Pancreas (tissue), 10 donors: ENCODE measurements at regions of chr1 and their contacts with region 1.

Region 1: GRCh38 chr1:214584805-214585766 is 17.9 kb upstream of the CENPF start:
- DNase-seq: no peak
- ATAC-seq: peak; percentile 79 to 93 (median 87)
- H3K4me3 ChIP-seq: no peak overlapping the region
- H3K27ac ChIP-seq: no peak overlapping the region
- H3K4me1 ChIP-seq: peaks cover 0 to 6% (median 0%) of the 10 kb centered on the region in 3 donors
- H3K27me3 ChIP-seq: no peaks in the 10 kb centered on the region
- CTCF ChIP-seq: peak in 3 of 4 donors; percentile 56 to 61 (median 58)

Region 2: DNA sequence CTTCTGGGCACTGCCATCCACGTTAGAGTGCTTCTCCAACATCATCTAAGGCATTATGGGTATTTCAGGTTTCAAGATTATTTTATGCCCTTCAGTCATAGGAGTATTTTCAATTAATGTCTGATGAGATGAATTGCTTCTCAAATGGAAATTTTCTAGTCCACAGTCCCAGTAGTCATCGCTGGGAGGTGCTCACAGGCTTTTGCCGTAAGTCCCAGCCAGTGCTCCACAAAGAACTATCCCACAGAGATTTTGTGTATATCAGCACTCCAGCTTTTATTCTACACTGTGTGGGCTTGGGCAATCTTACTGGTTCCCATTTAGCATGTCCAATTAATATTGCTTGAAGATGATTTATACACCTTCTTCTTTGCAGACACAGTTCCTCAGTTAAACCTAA is 243.2 kb before region 1 on chr1:
- intact Hi-C with region 1: loop called in 1 of 3 experiments (anchors 5 kb)
- DNase-seq: no peak
- ATAC-seq: no peak
- H3K4me3 ChIP-seq: no peak overlapping the region
- H3K27ac ChIP-seq: no peak overlapping the region
- H3K4me1 ChIP-seq: no peaks in the 10 kb centered on the region
- H3K27me3 ChIP-seq: no peaks in the 10 kb centered on the region
- CTCF ChIP-seq: no peak

Region 3: DNA sequence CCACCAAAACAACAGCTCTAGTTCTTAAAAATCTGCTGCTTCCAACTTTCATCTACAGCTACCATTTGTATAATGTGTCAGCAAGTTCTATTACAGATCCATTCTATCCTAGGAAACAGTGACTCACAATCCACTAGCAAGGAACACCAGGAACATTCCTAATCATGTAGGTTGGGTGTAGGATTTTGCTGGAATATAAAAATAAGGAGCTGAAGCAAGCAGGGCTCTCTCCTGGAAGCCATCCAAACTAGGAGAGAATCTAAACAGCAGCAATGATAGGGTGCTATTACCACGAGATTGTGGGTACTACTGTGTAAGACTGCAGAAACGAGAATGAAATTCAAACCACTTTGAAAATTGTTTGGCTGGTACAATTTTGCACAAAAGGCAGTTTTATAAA is 168.7 kb before region 1 on chr1:
- intact Hi-C with region 1: no loop called
- DNase-seq: no peak
- ATAC-seq: no peak
- H3K4me3 ChIP-seq: no peak overlapping the region
- H3K27ac ChIP-seq: no peak overlapping the region
- H3K4me1 ChIP-seq: peaks cover 3 to 12% (median 6%) of the 10 kb centered on the region in 3 donors
- H3K27me3 ChIP-seq: no peaks in the 10 kb centered on the region
- CTCF ChIP-seq: no peak

Region 4: GRCh38 chr1:214990619-214991018 is 405.5 kb after region 1 on chr1:
- intact Hi-C with region 1: no loop called
- DNase-seq: no peak
- ATAC-seq: no peak
- H3K4me3 ChIP-seq: no peak overlapping the region
- H3K27ac ChIP-seq: no peak overlapping the region
- H3K4me1 ChIP-seq: no peaks in the 10 kb centered on the region
- H3K27me3 ChIP-seq: no peaks in the 10 kb centered on the region
- CTCF ChIP-seq: no peak